Endothelial cell of umbilical vein (primary cell): ENCODE measurements at regions of chr1 and their contacts with region 1.

Region 1: DNA sequence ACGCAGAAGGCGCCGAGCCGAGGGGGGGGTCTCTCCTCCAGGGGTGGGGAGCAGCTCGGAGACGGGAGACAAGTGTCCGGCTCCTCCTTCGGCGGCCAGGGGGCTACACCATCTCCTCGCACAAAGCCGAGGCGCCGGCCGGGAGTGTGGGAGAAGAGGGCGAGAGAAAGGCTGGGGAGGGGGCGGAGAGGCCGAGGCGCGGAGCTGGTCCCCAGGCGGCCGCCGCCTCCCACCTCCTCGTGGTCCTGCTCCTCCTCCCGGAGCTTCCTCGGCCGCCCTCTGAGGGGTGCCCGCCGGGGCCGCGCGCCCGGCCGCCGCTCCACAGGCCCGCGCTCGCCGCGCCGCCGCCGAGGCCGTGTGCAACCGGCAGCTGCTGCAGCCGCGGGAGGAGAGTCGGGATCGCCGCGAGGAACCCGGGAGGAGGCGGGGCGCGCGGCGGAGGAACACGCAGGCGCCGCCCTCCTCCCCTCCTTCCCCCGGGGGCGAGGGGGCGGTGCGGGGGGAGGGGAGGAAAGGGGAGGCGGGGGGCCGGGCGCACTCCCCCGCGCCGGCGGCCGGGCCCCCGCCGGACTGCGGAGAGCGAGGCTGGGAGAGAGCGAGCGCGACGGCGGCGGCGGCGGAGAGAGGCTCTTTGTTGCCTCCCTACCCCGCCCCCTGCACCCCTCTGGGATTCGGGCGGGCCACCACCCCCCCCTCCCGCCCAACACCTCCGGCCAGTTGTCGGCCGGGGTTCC is at the start of gene ENAH:
- DNase-seq: peak; percentile 73
- H3K4me3 ChIP-seq: peak within 1 kb of the TSS; percentile 49 to 99 (median 98)
- H3K27ac ChIP-seq: peak within 1 kb of the TSS; percentile 94
- H3K4me1 ChIP-seq: peaks cover 46% of the 10 kb centered on the region
- H3K27me3 ChIP-seq: no peaks in the 10 kb centered on the region
- CTCF ChIP-seq: no peak
- POLR2A ChIP-seq: peak; percentile 83
- total RNA-seq, gene ENAH: 80.3 and 95.6 TPM in 2 replicates

Region 2: DNA sequence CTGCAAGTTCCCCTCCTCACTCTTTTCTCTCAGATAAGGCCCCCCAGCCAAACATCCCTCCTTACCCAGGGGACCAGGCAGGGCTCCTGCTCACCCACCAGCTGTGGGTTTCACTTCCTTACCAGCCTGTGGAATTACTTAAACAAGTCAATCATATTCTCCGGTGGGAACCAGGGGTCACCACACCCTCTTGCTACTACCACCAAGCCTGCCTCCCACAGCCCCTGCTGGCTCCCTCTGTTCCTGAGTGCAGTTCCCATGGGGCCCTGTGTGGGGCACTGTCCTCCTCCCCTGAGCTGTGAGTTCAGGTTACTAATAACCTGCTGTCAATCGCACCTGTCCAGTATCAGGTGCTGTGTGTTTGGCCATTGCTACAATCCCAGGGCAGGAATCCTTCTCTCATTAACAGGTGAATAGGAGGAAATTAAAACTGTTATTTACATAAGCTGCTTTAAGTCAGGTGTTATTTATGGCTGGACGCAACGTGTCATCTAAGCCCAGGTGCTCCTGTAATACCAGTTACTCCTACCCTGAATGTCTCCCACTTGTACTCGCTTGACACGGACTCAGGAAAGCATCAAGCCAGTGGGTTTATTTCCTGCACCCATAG is 172.0 kb before region 1 on chr1:
- CTCF ChIA-PET with region 1: no interaction called
- POLR2A ChIA-PET with region 1: interaction called, 3 read pairs
- dilution Hi-C with region 1: no loop called
- intact Hi-C with region 1: loop called (anchors 5 kb)
- DNase-seq: peak; percentile 54
- H3K4me3 ChIP-seq: no peak overlapping the region
- H3K27ac ChIP-seq: no peak overlapping the region
- H3K4me1 ChIP-seq: no peaks in the 10 kb centered on the region
- H3K27me3 ChIP-seq: no peaks in the 10 kb centered on the region
- CTCF ChIP-seq: peak; percentile 86
- POLR2A ChIP-seq: no peak

Region 3: DNA sequence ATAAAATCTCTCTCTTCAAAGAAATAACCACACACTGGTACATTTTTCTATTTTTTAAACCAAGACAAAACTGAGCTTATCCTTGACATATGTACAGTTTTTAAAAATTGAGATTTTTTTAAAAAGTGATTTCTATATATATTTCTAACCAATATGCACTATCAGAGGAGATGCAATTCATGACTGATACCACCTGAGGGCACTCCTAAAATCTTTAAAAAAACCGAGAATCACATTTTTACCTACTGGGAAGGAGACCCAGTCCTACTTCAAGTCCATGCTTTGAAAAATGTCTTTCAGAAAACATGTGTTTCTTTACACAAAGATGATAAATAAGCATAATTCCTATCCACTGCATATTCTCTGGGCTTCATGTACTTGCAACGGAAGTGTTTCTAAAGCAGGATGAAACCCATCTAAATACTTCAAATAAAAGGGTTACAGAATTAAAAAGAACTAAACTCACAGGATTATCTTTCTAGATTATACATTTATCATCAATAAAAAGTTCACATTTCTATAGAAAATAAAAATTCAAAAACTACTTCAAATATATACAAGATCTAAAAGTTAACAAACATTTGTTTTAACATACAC is 98.6 kb before region 1 on chr1:
- CTCF ChIA-PET with region 1: no interaction called
- POLR2A ChIA-PET with region 1: no interaction called
- dilution Hi-C with region 1: no loop called
- intact Hi-C with region 1: loop called (anchors 1 kb)
- DNase-seq: peak; percentile 57
- H3K4me3 ChIP-seq: no peak overlapping the region
- H3K27ac ChIP-seq: no peak overlapping the region
- H3K4me1 ChIP-seq: no peaks in the 10 kb centered on the region
- H3K27me3 ChIP-seq: no peaks in the 10 kb centered on the region
- CTCF ChIP-seq: peak; percentile 30 to 32
- POLR2A ChIP-seq: no peak

Region 4: DNA sequence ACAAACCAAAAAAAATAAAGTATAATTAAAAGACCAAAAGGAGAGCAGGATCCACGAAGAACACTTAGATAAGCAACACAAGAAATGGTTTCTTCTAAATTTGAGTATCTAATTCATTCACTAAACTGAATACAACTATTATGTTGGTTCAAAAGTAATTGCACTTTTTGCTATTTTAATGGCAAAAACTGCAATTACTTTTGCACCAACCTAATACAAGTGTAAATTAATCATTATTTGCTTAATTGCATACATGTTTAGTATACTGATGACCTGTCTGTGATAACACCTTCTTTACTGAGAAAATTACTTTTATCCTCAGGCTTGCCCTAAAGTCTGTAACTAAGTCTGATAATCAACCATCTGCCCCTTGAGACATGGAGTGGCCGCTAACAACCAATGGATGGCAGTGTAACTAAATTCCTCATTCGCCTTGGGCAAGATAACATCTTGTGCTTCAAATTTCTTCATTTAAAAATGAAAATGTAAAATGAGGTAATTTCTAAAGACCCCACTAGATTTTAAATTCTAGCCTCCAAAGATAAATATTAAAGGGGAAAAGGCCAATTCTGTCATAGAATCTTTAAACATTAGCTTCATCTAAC is 85.2 kb before region 1 on chr1:
- CTCF ChIA-PET with region 1: no interaction called
- POLR2A ChIA-PET with region 1: no interaction called
- dilution Hi-C with region 1: no loop called
- intact Hi-C with region 1: no loop called
- DNase-seq: peak; percentile 22
- H3K4me3 ChIP-seq: no peak overlapping the region
- H3K27ac ChIP-seq: no peak overlapping the region
- H3K4me1 ChIP-seq: no peaks in the 10 kb centered on the region
- H3K27me3 ChIP-seq: no peaks in the 10 kb centered on the region
- CTCF ChIP-seq: no peak
- POLR2A ChIP-seq: no peak

Region 5: DNA sequence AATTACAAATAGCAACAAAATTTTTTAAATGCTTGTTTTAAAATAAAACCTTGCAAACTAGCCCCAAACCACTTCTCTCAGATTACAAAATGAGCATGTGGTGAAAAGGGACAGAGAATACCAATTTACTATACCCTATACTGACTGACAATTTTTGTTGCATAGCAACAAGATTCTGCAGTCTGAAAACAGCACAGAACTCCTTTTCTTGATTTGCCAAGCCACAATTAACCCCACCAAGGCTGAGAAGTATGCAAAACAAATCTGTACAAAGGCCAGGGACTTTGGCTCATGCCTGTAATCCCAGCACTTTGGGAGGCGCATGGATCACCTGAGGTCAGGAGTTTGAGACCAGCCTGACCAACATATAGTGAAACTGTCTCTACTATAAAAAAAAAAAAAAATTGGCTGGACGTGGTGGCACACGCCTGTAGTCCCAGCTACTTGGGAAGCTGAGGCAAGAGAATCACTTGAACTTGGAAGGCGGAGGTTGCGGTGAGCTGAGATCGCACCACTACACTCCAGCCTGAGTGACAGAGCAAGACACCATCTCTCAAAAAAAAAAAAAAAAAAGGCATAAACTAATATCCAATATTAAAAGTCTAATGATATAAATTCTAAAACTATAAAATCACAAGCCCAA is 21.8 kb before region 1 on chr1:
- CTCF ChIA-PET with region 1: interaction called, 3 read pairs
- POLR2A ChIA-PET with region 1: no interaction called
- dilution Hi-C with region 1: no loop called
- intact Hi-C with region 1: loop called (anchors 2 kb)
- DNase-seq: no peak
- H3K4me3 ChIP-seq: no peak overlapping the region
- H3K27ac ChIP-seq: no peak overlapping the region
- H3K4me1 ChIP-seq: no peaks in the 10 kb centered on the region
- H3K27me3 ChIP-seq: no peaks in the 10 kb centered on the region
- CTCF ChIP-seq: no peak
- POLR2A ChIP-seq: no peak

Region 6: DNA sequence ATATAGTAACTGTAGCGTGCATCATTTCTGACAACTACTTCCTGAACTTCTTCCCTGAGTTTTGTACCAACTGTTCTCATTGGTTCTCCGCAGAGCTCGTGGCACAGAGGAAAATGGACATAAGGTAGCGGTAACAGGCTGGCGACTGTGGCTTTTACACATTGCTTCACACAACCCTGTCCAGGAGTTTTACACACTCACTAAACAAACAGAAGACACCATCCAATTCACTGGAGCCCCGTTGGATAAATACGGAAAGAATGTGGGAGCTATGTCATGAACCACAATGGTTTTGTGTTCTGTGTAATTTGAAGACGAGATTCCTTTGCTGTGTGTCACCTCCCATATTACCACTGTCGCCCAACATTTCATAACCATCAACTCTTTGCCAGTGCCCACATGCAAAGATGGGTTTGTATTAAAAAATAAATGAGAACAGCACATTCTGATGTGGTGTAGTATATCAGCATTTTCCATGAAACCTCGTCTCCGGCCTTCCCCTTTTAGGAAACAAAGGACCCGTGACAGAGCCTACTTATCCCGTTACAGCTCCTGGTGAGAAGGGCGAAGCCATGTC is 47.4 kb after region 1 on chr1:
- CTCF ChIA-PET with region 1: interaction called, 11 read pairs
- POLR2A ChIA-PET with region 1: interaction called, 4 read pairs
- dilution Hi-C with region 1: no loop called
- intact Hi-C with region 1: loop called (anchors 1 kb)
- DNase-seq: peak; percentile 67
- H3K4me3 ChIP-seq: no peak overlapping the region
- H3K27ac ChIP-seq: peak overlapping the region; percentile 58
- H3K4me1 ChIP-seq: peaks cover 20% of the 10 kb centered on the region
- H3K27me3 ChIP-seq: no peaks in the 10 kb centered on the region
- CTCF ChIP-seq: no peak
- POLR2A ChIP-seq: no peak

Region 7: GRCh38 chr1:225766967-225767633 is 114.2 kb after region 1 on chr1:
- CTCF ChIA-PET with region 1: interaction called, 34 read pairs
- POLR2A ChIA-PET with region 1: interaction called, 5 read pairs
- dilution Hi-C with region 1: no loop called
- intact Hi-C with region 1: loop called (anchors 1 kb)
- DNase-seq: peak; percentile 84
- H3K4me3 ChIP-seq: no peak overlapping the region
- H3K27ac ChIP-seq: peak overlapping the region; percentile 58
- H3K4me1 ChIP-seq: peaks cover 47% of the 10 kb centered on the region
- H3K27me3 ChIP-seq: no peaks in the 10 kb centered on the region
- CTCF ChIP-seq: no peak
- POLR2A ChIP-seq: no peak

Region 8: GRCh38 chr1:225999227-225999911 is 346.5 kb after region 1 on chr1 and contains the start of gene SDE2:
- CTCF ChIA-PET with region 1: no interaction called
- POLR2A ChIA-PET with region 1: no interaction called
- dilution Hi-C with region 1: no loop called
- intact Hi-C with region 1: loop called (anchors 1 kb)
- DNase-seq: peak; percentile 100
- H3K4me3 ChIP-seq: peak within 1 kb of the TSS; percentile 75 to 97 (median 90)
- H3K27ac ChIP-seq: peak within 1 kb of the TSS; percentile 96
- H3K4me1 ChIP-seq: peaks cover 52% of the 10 kb centered on the region
- H3K27me3 ChIP-seq: no peaks in the 10 kb centered on the region
- CTCF ChIP-seq: no peak
- POLR2A ChIP-seq: peak; percentile 98
- total RNA-seq, gene SDE2: 15.9 and 16.1 TPM in 2 replicates